Endothelial cell of umbilical vein (primary cell): ENCODE measurements at regions of chr15 and their contacts with region 1.

Region 1: GRCh38 chr15:73633111-73633990 is at the start of gene NPTN:
- DNase-seq: peak; percentile 99
- H3K4me3 ChIP-seq: peak within 1 kb of the TSS; percentile 33 to 99 (median 67)
- H3K27ac ChIP-seq: peak within 1 kb of the TSS; percentile 89
- H3K4me1 ChIP-seq: peaks cover 31% of the 10 kb centered on the region
- H3K27me3 ChIP-seq: peaks cover 0 to 7% of the 10 kb centered on the region in 2 experiments
- CTCF ChIP-seq: no peak
- POLR2A ChIP-seq: peak; percentile 92
- total RNA-seq, gene NPTN: 71.5 and 77.4 TPM in 2 replicates

Region 2: DNA sequence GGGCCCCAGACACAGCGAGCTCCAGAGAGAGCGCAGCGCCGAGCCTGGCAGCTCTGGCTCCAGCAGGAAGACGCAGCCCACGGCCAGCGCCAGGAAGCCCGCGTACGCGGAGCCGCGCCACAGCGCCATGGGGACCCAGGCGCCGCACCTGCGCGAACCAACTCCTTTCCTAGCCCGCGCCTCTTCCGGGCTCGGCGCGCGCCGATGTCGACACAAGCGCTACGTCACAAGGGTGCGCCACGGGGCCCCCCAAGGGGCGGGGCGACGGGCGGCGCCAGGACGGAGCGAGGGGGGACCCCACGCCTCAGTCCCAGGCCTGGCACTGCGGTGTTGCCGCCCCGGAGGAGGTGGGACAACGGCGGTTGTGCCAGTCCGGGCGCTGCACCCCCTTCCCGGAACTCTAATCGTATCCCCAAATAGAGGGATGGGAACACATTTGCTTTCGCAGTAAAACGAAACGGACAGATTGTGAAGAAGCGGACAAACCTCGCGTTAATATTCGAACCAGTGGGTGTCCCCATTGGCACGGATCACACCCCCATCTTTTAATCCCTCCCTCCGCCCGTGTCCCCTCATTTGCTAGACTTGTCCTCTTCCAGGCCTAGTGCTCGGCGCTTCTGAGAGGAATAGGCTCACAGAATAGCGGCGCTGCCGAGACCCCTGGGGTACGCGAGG is 849.7 kb before region 1 on chr15 and contains the start of gene ADPGK:
- CTCF ChIA-PET with region 1: no interaction called
- POLR2A ChIA-PET with region 1: no interaction called
- dilution Hi-C with region 1: no loop called
- intact Hi-C with region 1: loop called (anchors 10 kb)
- DNase-seq: peak; percentile 94
- H3K4me3 ChIP-seq: peak within 1 kb of the TSS; percentile 49 to 91 (median 61)
- H3K27ac ChIP-seq: peak within 1 kb of the TSS; percentile 61
- H3K4me1 ChIP-seq: peaks cover 10% of the 10 kb centered on the region
- H3K27me3 ChIP-seq: peaks cover 14 to 18% of the 10 kb centered on the region in 2 experiments
- CTCF ChIP-seq: no peak
- POLR2A ChIP-seq: peak; percentile 92
- total RNA-seq, gene ADPGK: 51.0 and 51.7 TPM in 2 replicates

Region 3: GRCh38 chr15:73573572-73573971 is 59.8 kb before region 1 on chr15:
- CTCF ChIA-PET with region 1: interaction called, 27 read pairs
- POLR2A ChIA-PET with region 1: no interaction called
- dilution Hi-C with region 1: no loop called
- intact Hi-C with region 1: no loop called
- DNase-seq: peak; percentile 80
- H3K4me3 ChIP-seq: no peak overlapping the region
- H3K27ac ChIP-seq: peak overlapping the region; percentile 49
- H3K4me1 ChIP-seq: peaks cover 13% of the 10 kb centered on the region
- H3K27me3 ChIP-seq: no peaks in the 10 kb centered on the region
- CTCF ChIP-seq: no peak
- POLR2A ChIP-seq: no peak

Region 4: GRCh38 chr15:73617301-73617831 is 16.0 kb before region 1 on chr15:
- CTCF ChIA-PET with region 1: interaction called, 39 read pairs
- POLR2A ChIA-PET with region 1: no interaction called
- dilution Hi-C with region 1: no loop called
- intact Hi-C with region 1: no loop called
- DNase-seq: no peak
- H3K4me3 ChIP-seq: no peak overlapping the region
- H3K27ac ChIP-seq: no peak overlapping the region
- H3K4me1 ChIP-seq: no peaks in the 10 kb centered on the region
- H3K27me3 ChIP-seq: no peaks in the 10 kb centered on the region
- CTCF ChIP-seq: no peak
- POLR2A ChIP-seq: no peak

Region 5: GRCh38 chr15:73677146-73677607 is 43.8 kb after region 1 on chr15:
- CTCF ChIA-PET with region 1: interaction called, 105 read pairs
- POLR2A ChIA-PET with region 1: no interaction called
- dilution Hi-C with region 1: no loop called
- intact Hi-C with region 1: loop called (anchors 2 kb)
- DNase-seq: peak; percentile 70
- H3K4me3 ChIP-seq: no peak overlapping the region
- H3K27ac ChIP-seq: no peak overlapping the region
- H3K4me1 ChIP-seq: no peaks in the 10 kb centered on the region
- H3K27me3 ChIP-seq: peaks cover 12 to 31% of the 10 kb centered on the region in 2 experiments
- CTCF ChIP-seq: peak; percentile 81
- POLR2A ChIP-seq: no peak

Region 6: GRCh38 chr15:73697033-73697467 is 63.7 kb after region 1 on chr15:
- CTCF ChIA-PET with region 1: interaction called, 207 read pairs
- POLR2A ChIA-PET with region 1: no interaction called
- dilution Hi-C with region 1: no loop called
- intact Hi-C with region 1: loop called (anchors 1 kb)
- DNase-seq: peak; percentile 99
- H3K4me3 ChIP-seq: no peak overlapping the region
- H3K27ac ChIP-seq: peak overlapping the region; percentile 55
- H3K4me1 ChIP-seq: peaks cover 21% of the 10 kb centered on the region
- H3K27me3 ChIP-seq: no peaks in the 10 kb centered on the region
- CTCF ChIP-seq: no peak
- POLR2A ChIP-seq: peak; percentile 65

Region 7: DNA sequence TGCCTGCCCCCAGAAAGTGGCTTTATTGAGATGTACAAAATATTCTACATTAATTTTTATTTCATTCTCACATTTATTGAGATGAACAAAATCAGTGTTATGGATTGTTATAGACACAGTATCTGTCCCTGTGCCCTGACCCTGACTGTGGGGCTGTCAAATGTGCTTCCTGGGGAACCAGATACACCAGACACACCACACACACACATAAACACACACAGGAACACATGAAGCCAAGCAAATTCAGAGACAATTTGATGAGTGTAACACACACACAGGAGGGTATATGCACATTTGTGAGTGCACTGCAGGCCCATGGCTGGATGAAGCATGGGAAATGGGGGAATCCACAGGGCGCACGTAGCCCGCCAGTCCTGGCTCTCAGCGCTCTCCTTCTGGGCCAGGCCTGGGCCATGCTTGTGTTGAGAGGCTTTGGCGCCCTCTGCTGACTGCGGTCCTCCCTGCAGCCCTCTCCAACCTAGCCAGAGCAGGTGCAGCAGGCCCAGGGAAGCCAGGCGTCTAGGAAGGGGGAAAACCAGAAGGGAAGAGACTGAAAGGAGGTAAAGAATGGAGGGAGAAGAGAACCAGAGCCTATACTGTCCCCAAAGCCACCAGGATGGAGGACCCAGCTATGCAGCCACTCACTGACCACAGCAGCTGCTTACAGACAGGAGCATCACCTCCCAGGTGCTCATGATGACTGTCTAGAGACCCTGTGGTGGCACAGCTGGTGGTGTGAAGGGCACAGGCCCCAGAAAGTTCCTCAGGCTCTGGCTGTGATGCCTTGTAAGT is 274.9 kb after region 1 on chr15:
- CTCF ChIA-PET with region 1: interaction called, 3 read pairs
- POLR2A ChIA-PET with region 1: no interaction called
- dilution Hi-C with region 1: no loop called
- intact Hi-C with region 1: loop called (anchors 1 kb)
- DNase-seq: peak; percentile 63
- H3K4me3 ChIP-seq: no peak overlapping the region
- H3K27ac ChIP-seq: no peak overlapping the region
- H3K4me1 ChIP-seq: no peaks in the 10 kb centered on the region
- H3K27me3 ChIP-seq: peaks cover 0 to 10% of the 10 kb centered on the region in 2 experiments
- CTCF ChIP-seq: peak; percentile 92 to 95
- POLR2A ChIP-seq: no peak